ENCODE measurements at regions of chr17 and their contacts with region 1.

Region 1: DNA sequence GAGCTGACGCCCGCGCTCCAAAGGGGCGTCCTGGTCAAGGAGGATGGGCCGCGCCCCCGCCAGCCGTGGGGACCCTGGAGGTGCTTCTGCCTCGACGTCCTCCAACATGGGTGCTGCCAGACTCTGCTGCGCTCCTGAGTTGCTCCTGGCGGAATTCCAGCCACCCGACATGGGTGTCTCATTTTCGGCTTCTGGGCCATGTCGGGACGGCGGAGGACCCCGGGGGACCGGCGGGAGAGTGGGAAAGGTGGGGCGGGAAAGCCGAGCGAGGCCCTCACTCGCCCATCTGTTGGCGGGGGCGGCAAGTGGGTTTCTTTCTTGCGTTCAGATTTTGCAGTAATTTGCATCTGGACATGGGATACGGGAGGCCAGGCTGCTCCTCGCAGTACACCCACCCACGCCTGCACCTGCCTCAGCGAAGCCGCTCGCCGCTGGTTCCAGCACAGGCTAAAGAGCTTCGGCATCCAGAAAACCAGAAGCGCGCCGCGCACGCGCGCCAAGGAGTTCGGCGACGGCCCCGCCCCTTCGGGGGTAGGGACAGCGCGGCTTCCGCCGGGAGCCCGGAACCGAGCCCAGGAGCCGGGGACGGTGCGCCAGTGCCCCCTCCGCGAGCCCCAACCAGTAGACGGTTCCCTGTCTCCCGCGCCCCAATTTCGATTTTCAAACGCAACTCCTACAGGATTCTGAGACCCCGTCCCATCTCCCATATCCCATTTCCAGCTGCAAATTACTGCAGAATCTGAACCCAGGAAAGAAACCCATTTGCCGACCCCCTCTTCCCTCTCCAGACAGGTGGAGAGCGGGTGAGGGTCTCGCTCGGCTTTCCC is at the start of gene ARMC7:
- DNase-seq: peak; percentile 91
- ATAC-seq: peak; percentile 80
- H3K4me3 Mint-ChIP-seq: peak within 1 kb of the TSS; percentile 89
- H3K27ac Mint-ChIP-seq: peak within 1 kb of the TSS; percentile 87
- H3K4me1 Mint-ChIP-seq: peaks cover 36% of the 10 kb centered on the region
- H3K27me3 Mint-ChIP-seq: no peaks in the 10 kb centered on the region
- CTCF ChIP-seq: no peak
- total RNA-seq, gene ARMC7: 11.8 and 15.4 TPM in 2 replicates

Region 2: DNA sequence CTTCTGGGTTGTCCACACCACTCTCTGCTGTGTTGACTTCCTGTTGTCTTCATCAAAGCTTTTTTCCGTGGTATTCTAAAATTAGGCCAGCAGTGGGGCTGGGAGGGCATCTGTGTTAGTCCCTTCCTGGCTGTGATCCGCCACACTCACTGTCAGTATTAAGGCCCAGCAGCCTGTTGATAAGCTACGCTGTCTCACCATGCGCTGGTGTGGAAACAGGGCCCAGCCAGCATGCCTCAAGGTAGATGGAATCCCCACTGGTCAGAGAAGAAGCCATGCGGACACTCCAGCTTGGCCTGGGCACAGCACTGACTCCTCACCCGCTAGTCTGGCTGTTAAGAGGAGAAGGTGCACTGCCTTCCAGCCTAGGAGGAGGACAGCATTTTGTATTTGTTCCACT is 110.8 kb before region 1 on chr17:
- CTCF ChIA-PET with region 1: no interaction called
- POLR2A ChIA-PET with region 1: no interaction called
- intact Hi-C with region 1: no loop called
- DNase-seq: no peak
- ATAC-seq: no peak
- H3K4me3 Mint-ChIP-seq: no peak overlapping the region
- H3K27ac Mint-ChIP-seq: no peak overlapping the region
- H3K4me1 Mint-ChIP-seq: no peaks in the 10 kb centered on the region
- H3K27me3 Mint-ChIP-seq: peaks cover 2% of the 10 kb centered on the region
- CTCF ChIP-seq: no peak

Region 3: GRCh38 chr17:75012346-75013091 is 97.1 kb before region 1 on chr17 and contains the start of gene MRPL58:
- CTCF ChIA-PET with region 1: interaction called, 3 read pairs
- POLR2A ChIA-PET with region 1: interaction called, 11 read pairs
- intact Hi-C with region 1: no loop called
- DNase-seq: peak; percentile 78
- ATAC-seq: peak; percentile 95
- H3K4me3 Mint-ChIP-seq: peak within 1 kb of the TSS; percentile 97
- H3K27ac Mint-ChIP-seq: peak within 1 kb of the TSS; percentile 89
- H3K4me1 Mint-ChIP-seq: peaks cover 29% of the 10 kb centered on the region
- H3K27me3 Mint-ChIP-seq: no peaks in the 10 kb centered on the region
- CTCF ChIP-seq: no peak
- total RNA-seq, gene MRPL58: 28.4 and 31.8 TPM in 2 replicates

Region 4: GRCh38 chr17:75077496-75078283 is 31.9 kb before region 1 on chr17:
- CTCF ChIA-PET with region 1: interaction called, 16 read pairs
- POLR2A ChIA-PET with region 1: interaction called, 12 read pairs
- intact Hi-C with region 1: loop called (anchors 2 kb)
- DNase-seq: peak; percentile 53
- ATAC-seq: peak; percentile 77
- H3K4me3 Mint-ChIP-seq: peak overlapping the region; percentile 83
- H3K27ac Mint-ChIP-seq: peak overlapping the region; percentile 72
- H3K4me1 Mint-ChIP-seq: peaks cover 29% of the 10 kb centered on the region
- H3K27me3 Mint-ChIP-seq: peaks cover 3% of the 10 kb centered on the region
- CTCF ChIP-seq: no peak

Region 5: GRCh38 chr17:75154195-75155106 is 44.8 kb after region 1 on chr17 and contains the start of gene JPT1:
- CTCF ChIA-PET with region 1: interaction called, 4 read pairs
- POLR2A ChIA-PET with region 1: interaction called, 20 read pairs
- intact Hi-C with region 1: loop called (anchors 1 kb)
- DNase-seq: peak; percentile 85
- ATAC-seq: peak; percentile 97
- H3K4me3 Mint-ChIP-seq: peak within 1 kb of the TSS; percentile 91
- H3K27ac Mint-ChIP-seq: peak within 1 kb of the TSS; percentile 77
- H3K4me1 Mint-ChIP-seq: peaks cover 34% of the 10 kb centered on the region
- H3K27me3 Mint-ChIP-seq: no peaks in the 10 kb centered on the region
- CTCF ChIP-seq: no peak
- total RNA-seq, gene JPT1: 70.5 and 72.9 TPM in 2 replicates

Region 6: GRCh38 chr17:75205037-75205792 is 95.6 kb after region 1 on chr17 and contains the start of gene NUP85:
- CTCF ChIA-PET with region 1: interaction called, 140 read pairs
- POLR2A ChIA-PET with region 1: interaction called, 29 read pairs
- intact Hi-C with region 1: loop called (anchors 1 kb)
- DNase-seq: peak; percentile 90
- ATAC-seq: peak; percentile 91
- H3K4me3 Mint-ChIP-seq: peak within 1 kb of the TSS; percentile 96
- H3K27ac Mint-ChIP-seq: peak within 1 kb of the TSS; percentile 99
- H3K4me1 Mint-ChIP-seq: peaks cover 22% of the 10 kb centered on the region
- H3K27me3 Mint-ChIP-seq: no peaks in the 10 kb centered on the region
- CTCF ChIP-seq: no peak
- total RNA-seq, gene NUP85: 103 and 107 TPM in 2 replicates

Region 7: GRCh38 chr17:75271233-75271954 is 161.8 kb after region 1 on chr17:
- CTCF ChIA-PET with region 1: interaction called, 12 read pairs
- POLR2A ChIA-PET with region 1: interaction called, 13 read pairs
- intact Hi-C with region 1: loop called (anchors 10 kb)
- DNase-seq: peak; percentile 95
- ATAC-seq: peak; percentile 91
- H3K4me3 Mint-ChIP-seq: peak overlapping the region; percentile 82
- H3K27ac Mint-ChIP-seq: peak overlapping the region; percentile 76
- H3K4me1 Mint-ChIP-seq: peaks cover 20% of the 10 kb centered on the region
- H3K27me3 Mint-ChIP-seq: no peaks in the 10 kb centered on the region
- CTCF ChIP-seq: no peak

Measured in activated B cell treated with CpG ODN at 0.5 μM for 24 hours (primary cell).